BJ (cell line): ENCODE measurements at regions of chr2 and their contacts with region 1.

Region 1: GRCh38 chr2:113138428-113139322 is 11.3 kb downstream of the IL1RN start:
- DNase-seq: peak; percentile 11
- H3K4me3 ChIP-seq: no peak overlapping the region
- H3K27me3 ChIP-seq: no peaks in the 10 kb centered on the region
- CTCF ChIP-seq: peak; percentile 75

Region 2: DNA sequence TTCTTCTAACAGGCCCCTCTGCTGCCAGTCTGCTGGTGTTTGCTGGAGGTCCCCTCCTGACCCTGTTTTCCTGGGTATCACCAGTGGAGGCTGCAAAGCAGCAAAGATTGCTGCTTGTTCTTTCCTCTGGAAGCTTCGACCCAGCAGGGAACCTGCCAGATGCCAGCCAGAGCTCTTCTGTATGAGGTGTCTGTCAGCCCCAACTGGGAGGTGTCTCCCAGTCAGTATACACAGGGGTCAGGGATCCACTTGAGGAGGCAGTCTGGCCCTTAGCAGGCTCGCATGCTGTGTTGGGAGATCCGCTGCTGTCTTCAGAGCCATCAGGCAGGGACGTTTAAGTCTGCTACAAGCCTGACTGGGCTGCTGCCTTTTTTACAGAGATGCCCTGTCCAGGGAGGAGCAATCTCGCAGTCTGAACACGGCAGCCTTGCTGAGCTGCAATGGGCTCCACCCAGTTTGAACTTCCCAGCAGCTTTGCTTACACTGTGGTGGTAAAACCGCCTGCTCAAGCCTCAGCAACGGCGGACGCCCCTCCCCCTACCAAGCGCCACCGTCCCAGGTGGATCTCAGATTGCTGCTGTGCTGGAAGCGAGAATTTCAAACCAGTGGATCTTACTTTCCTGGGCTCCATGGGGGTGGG is 524.4 kb before region 1 on chr2:
- CTCF ChIA-PET with region 1: no interaction called
- POLR2A ChIA-PET with region 1: no interaction called
- DNase-seq: no peak
- H3K4me3 ChIP-seq: no peak overlapping the region
- H3K27me3 ChIP-seq: no peaks in the 10 kb centered on the region; the same call in none of the 2 replicates
- CTCF ChIP-seq: no peak

Region 3: DNA sequence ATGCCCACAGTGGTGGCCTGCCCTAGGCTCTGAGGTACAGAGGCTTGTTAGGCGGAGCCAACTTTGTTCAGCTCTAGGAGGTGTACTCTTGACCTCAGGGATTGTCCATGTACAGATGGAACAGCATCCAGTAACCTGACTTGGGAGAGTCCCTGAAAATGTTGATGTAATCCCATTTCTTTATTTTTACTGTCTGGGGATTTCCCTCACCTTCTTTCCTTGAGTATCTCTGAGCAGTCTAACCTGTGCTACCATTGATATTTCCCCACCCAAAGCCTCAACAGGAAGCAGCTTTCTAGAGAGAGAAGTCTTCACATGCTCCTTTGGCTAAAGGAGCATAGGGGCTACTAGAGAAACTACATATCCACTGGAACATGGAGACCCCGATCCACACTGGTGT is 123.0 kb before region 1 on chr2:
- CTCF ChIA-PET with region 1: no interaction called
- POLR2A ChIA-PET with region 1: no interaction called
- DNase-seq: no peak
- H3K4me3 ChIP-seq: no peak overlapping the region
- H3K27me3 ChIP-seq: no peaks in the 10 kb centered on the region
- CTCF ChIP-seq: no peak

Region 4: DNA sequence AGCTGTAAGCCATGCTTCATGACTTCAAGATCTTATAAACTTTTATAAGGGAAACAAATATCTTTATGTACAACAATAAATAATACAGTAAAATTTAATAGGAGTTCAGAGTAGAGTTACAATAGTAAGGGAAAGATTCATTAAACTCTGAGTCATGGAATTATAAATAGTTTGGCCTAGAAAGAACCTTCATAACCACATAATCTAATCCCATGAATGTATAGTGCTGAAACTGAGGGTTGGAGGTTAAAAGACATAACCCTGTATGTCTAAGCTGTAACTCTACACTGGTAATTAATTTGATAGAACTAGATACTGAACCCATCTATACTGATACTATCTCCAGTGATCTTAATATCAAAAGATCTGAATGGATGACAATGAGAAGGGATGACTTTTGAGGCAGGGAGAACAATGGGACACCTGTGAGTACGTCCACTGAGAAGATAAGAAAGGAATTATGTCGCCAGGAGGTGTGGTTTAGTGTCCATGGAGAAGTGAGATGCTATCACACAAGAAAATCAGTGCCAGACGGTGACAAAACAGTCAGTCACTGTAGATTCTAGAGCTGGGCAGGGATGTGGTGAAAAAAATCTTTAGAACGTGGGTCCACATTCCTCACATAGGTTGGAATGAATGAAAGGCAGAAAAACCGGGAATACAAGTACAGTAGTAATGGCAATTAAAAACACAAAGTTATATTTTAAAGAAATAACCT is 69.8 kb before region 1 on chr2:
- CTCF ChIA-PET with region 1: no interaction called
- POLR2A ChIA-PET with region 1: no interaction called
- DNase-seq: no peak
- H3K4me3 ChIP-seq: no peak overlapping the region
- H3K27me3 ChIP-seq: no peaks in the 10 kb centered on the region
- CTCF ChIP-seq: no peak

Region 5: GRCh38 chr2:113117541-113118262 is 21.0 kb before region 1 on chr2:
- CTCF ChIA-PET with region 1: interaction called, 15 read pairs
- POLR2A ChIA-PET with region 1: interaction called, 3 read pairs
- DNase-seq: peak; percentile 80
- H3K4me3 ChIP-seq: no peak overlapping the region
- H3K27me3 ChIP-seq: 0 out of 2 replicates have a peak, but pooled peaks cover 3% of the 10 kb centered on the region
- CTCF ChIP-seq: no peak

Region 6: GRCh38 chr2:113157118-113157896 is 18.6 kb after region 1 on chr2:
- CTCF ChIA-PET with region 1: interaction called, 44 read pairs
- POLR2A ChIA-PET with region 1: no interaction called
- DNase-seq: no peak
- H3K4me3 ChIP-seq: peak overlapping the region; percentile 37
- H3K27me3 ChIP-seq: no peaks in the 10 kb centered on the region; the same call in 1 of the 2 replicates
- CTCF ChIP-seq: no peak

Region 7: GRCh38 chr2:113203901-113204519 is 65.3 kb after region 1 on chr2:
- CTCF ChIA-PET with region 1: interaction called, 213 read pairs
- POLR2A ChIA-PET with region 1: no interaction called
- DNase-seq: no peak
- H3K4me3 ChIP-seq: no peak overlapping the region
- H3K27me3 ChIP-seq: no peaks in the 10 kb centered on the region
- CTCF ChIP-seq: peak; percentile 90

Region 8: DNA sequence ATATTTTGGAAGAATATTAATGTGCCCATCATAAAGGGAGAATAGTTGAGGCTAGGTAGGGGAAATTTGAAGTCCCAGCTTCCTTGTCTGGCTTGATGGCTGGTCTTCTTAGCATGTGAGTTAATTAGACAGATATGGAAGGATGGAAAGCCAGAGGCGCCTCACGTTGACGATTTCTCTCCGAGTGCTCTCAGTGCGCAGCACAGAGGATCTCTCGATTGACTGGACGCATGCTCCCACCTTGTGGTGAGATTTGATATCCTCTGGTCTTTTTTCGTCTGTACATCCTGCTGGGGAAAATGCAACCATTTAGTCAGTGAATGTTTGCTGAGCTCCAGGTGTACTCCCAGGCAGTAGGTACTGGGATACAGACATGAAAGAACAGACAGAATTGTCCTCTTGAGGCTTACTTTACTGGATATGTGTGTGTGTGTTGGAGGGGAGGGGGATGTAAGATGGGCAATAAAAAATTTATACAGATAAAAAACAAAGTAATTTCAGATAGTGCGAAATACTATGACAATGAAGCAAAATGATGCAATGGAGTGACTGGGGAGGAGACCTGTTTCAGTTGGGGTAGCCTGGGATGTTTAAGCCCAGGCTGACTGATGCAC is 231.9 kb after region 1 on chr2:
- CTCF ChIA-PET with region 1: interaction called, 48 read pairs
- POLR2A ChIA-PET with region 1: no interaction called
- DNase-seq: no peak
- H3K4me3 ChIP-seq: no peak overlapping the region
- H3K27me3 ChIP-seq: no peaks in the 10 kb centered on the region; the same call in 1 of the 2 replicates
- CTCF ChIP-seq: peak; percentile 60

Region 9: DNA sequence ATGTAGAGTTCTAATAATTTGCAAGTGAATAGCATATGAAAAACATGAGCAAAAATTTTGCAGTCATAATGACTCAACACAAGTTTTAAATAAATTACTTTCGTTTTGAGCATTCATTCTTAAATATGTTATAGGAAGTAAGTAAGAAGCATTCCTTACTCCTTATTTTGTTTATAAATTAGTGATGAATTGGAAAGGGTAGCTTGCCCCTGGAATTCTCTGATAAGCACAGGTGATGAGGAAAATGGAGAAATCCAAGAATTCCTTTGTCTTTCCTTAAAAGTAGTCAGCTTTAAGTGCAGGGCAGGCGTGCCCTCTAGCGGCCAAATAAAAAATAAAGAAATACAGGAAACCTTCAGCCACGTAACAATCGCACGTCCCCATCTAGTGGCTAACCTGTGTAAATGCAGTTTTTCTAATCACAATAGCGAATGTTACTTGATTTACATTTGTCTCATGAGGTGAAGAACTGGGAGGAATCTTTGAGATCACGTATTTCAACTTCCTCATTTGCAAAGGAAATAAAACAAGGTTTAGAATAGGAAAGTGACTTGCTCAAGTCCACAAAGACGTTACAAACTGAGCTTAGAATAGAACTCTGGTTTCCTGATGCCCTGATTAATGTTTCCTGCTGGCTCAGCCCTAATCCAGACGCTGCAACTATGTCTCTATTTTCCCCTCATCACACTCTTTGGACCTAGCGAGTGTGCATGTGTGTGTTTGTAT is 251.6 kb after region 1 on chr2:
- CTCF ChIA-PET with region 1: interaction called, 107 read pairs
- POLR2A ChIA-PET with region 1: interaction called, 3 read pairs
- DNase-seq: peak; percentile 31
- H3K4me3 ChIP-seq: no peak overlapping the region
- H3K27me3 ChIP-seq: no peaks in the 10 kb centered on the region
- CTCF ChIP-seq: peak; percentile 72